Activated CD8-positive, alpha-beta memory T cell treated with anti-CD3 and anti-CD28 coated beads, Interleukin-2, amount 10 ng/mL, durations not matched to agents 7 days and 5 days (primary cell): ENCODE measurements at regions of chr1 and their contacts with region 1.

Region 1: DNA sequence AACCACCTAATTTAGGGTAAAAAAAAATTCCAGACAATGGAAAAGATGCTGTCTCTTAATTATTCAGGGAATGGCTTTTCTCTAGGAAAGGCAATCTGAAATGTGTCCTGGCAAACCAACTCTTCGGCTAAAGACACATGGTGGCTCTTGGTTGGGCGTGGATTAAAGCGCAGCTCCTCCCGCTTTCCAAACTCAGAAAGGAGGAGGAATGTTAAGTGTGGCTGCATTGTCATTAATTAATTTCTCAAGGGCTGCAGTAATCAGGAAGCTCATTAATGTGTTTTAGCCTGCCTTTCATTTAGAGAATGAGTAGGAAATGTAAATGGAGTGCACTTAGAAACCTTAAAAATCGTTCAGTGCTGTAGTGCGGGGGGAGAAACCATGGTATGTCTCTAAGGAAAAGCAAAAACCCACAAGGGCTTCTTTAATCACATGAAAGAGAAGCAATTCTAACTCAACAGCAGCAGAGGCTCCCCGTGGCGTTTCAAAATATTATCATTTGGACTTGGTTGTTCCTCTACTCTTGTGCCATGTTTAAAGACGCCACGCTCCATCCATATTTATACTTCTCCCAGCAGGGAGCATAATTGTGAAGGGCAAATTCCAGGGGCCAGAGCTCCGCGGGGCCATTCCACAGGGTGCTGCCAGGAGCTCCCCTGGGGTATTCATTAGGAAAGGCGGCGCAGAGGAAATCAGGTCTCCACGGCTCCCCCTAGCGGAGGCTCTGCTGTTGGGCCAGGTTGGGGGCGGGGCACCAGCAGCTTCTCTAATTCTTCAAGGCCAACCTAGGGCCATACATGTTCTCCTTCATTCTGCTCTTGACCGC is 91.9 kb upstream of the SSX2IP start:
- DNase-seq: peak; percentile 85
- ATAC-seq: peak; percentile 89
- H3K4me3 Mint-ChIP-seq: peak overlapping the region; percentile 51
- H3K27ac Mint-ChIP-seq: peak overlapping the region; percentile 34
- H3K4me1 Mint-ChIP-seq: peaks cover 19% of the 10 kb centered on the region
- H3K27me3 Mint-ChIP-seq: peaks cover 8% of the 10 kb centered on the region

Region 2: DNA sequence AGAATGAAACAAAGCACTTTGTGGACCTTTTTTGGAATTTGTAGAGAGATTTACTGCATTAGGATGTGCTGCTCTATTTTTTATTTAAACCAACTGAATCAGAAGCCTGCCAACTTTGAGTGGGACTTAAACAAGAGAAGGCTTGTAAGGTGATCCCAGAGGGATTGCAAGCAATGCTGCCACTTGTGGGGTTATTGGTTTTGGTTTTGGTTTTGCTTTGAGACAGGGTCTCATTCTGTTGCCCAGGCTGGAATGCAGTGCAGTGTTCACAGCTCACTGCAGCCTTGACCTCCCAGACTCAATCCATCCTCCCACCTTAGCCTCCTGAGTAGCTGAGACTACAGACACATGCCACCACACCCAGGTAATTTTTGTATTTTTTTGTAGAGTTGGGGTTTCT is 243.6 kb before region 1 on chr1:
- CTCF ChIA-PET with region 1: no interaction called
- DNase-seq: no peak
- ATAC-seq: peak; percentile 58
- H3K4me3 Mint-ChIP-seq: no peak overlapping the region
- H3K27ac Mint-ChIP-seq: peak overlapping the region; percentile 12
- H3K4me1 Mint-ChIP-seq: peaks cover 26% of the 10 kb centered on the region
- H3K27me3 Mint-ChIP-seq: no peaks in the 10 kb centered on the region

Region 3: DNA sequence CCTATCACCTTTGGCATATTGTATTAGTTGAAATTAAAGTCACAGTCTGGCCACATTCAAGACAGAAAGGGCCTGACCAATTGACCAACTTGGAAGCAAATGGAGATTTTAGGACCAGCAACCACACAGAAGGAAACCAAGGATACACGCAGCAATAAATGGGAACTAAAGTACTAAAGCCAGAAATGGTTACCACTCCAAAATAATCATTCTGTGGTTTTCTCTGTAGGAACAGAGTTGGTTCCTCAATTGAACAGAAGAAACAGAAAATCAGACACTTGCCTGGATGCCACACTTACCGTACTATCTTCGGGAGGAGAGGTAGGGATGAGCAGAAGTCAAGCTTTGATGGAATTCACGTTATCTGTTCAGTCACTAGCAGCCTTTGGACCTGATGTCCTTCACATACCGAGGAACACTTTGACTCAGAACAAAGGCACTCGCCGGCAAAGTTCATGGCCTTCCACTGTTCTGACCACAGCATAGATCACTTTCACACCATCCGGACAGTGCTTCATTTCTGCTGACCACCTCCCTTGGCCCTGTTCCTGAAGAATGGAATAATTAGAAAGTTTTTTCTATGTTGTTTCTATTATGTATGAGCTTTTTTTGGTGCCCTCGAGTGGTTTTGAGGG is 13.9 kb after region 1 on chr1:
- CTCF ChIA-PET with region 1: interaction called, 30 read pairs
- DNase-seq: no peak
- ATAC-seq: no peak
- H3K4me3 Mint-ChIP-seq: no peak overlapping the region
- H3K27ac Mint-ChIP-seq: no peak overlapping the region
- H3K4me1 Mint-ChIP-seq: no peaks in the 10 kb centered on the region
- H3K27me3 Mint-ChIP-seq: peaks cover 4% of the 10 kb centered on the region

Region 4: DNA sequence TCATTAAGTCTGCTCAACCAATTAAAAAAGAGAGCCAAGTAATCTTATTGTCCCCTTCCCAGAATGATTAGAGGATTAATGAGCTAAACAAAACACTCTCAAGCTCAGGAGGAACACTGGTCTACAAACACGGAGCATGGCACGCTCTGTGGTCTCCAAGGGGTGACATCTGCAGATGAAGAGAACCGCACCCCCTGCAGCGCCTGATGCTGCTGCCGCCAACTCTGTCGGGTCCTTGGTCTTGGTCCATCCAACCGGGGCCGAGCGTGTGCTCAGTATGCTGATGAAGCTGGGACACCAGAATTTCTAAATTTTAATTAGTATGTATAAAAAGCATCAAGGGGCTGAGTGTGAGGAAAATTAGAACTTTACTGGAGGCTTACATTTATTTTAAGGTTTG is 28.2 kb after region 1 on chr1:
- CTCF ChIA-PET with region 1: interaction called, 10 read pairs
- DNase-seq: no peak
- ATAC-seq: no peak
- H3K4me3 Mint-ChIP-seq: no peak overlapping the region
- H3K27ac Mint-ChIP-seq: no peak overlapping the region
- H3K4me1 Mint-ChIP-seq: no peaks in the 10 kb centered on the region
- H3K27me3 Mint-ChIP-seq: peaks cover 24% of the 10 kb centered on the region

Region 5: GRCh38 chr1:85033221-85033620 is 251.1 kb after region 1 on chr1:
- CTCF ChIA-PET with region 1: no interaction called
- DNase-seq: no peak
- ATAC-seq: no peak
- H3K4me3 Mint-ChIP-seq: no peak overlapping the region
- H3K27ac Mint-ChIP-seq: no peak overlapping the region
- H3K4me1 Mint-ChIP-seq: no peaks in the 10 kb centered on the region
- H3K27me3 Mint-ChIP-seq: no peaks in the 10 kb centered on the region

Region 6: DNA sequence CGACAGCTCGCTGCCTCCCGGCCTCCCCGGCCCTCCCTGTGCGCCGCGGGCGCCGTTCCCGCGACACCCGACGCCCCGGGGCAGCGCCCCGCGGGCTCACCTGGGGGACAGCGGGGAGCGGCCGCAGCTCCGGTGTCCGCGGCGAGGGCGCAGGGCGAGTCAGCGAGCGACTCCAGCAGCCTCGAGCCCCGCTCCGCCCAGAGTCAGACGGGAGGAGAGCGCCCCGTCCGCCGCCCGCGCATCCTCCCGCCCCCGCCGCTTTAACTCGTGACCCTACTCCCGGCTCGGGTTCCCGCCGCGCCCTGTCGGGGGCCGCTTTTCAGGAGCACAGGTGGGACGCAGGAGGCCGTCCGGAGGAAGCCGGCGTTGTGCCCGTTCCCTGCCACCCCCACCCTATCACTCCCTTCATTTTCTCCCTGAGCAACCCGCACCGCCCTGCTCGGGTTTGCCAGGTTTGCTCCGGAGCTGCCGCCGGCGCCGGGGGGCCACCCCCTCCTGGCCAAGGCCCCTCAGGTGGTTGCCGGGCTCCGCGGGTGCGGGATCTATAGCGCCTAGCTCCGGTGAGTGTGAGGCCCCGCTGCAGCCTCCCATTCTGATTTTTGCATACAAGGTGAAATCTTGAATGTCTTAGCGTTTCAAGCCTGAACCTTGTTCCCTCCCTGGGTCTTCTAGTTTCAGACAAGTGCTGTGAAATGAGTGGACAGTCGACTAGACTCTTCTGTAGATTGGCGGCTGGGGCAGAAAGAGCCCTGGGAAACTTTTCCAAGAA is 266.3 kb after region 1 on chr1 and contains the start of gene MCOLN3:
- CTCF ChIA-PET with region 1: no interaction called
- DNase-seq: peak; percentile 67
- ATAC-seq: peak; percentile 84
- H3K4me3 Mint-ChIP-seq: peak within 1 kb of the TSS; percentile 72
- H3K27ac Mint-ChIP-seq: no peak within 1 kb of the TSS
- H3K4me1 Mint-ChIP-seq: peaks cover 26% of the 10 kb centered on the region
- H3K27me3 Mint-ChIP-seq: peaks cover 51% of the 10 kb centered on the region
- total RNA-seq, gene MCOLN3: 1.1 to 2.2 TPM